MCF 10A (cell line): ENCODE measurements at regions of chr19 and their contacts with region 1.

Region 1: DNA sequence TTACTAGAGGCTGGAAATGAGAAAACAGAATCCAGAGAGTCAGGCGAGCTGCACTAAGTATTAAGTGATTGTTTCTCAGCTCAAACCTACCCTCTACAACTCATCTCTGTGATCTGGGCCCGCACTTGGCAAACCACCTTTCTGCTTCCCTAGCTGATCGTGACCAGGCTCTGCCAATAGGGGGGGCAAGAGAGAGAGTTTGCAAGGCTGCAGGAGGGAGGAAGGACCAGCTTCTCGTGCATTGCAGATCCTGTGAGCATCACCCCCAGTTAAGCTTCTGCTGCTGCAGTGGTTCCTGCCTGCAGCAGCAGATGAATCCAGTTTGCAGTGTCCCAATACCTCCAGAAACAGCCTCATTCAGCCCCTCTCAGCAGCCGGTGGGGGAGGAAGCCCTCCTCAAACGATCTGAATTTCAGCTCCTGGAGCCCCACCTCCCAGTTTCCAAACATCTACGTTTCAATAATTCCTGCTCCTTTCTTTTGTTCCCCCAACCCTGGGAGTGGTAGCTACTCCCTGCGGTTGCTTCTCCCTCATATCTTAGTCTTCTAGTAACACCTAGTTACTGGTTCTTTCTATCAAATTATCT is 20.0 kb downstream of the XRCC1 start:
- DNase-seq: peak; percentile 81
- H3K4me3 Mint-ChIP-seq: no peak overlapping the region
- H3K27ac Mint-ChIP-seq: no peak overlapping the region
- H3K4me1 Mint-ChIP-seq: no peaks in the 10 kb centered on the region
- H3K27me3 Mint-ChIP-seq: no peaks in the 10 kb centered on the region
- CTCF ChIP-seq: peak; percentile 76

Region 2: GRCh38 chr19:43433358-43433673 is 122.0 kb before region 1 on chr19:
- CTCF ChIA-PET with region 1: no interaction called
- POLR2A ChIA-PET with region 1: no interaction called
- intact Hi-C with region 1: no loop called
- DNase-seq: no peak
- H3K4me3 Mint-ChIP-seq: no peak overlapping the region
- H3K27ac Mint-ChIP-seq: no peak overlapping the region
- H3K4me1 Mint-ChIP-seq: peaks cover 2% of the 10 kb centered on the region
- H3K27me3 Mint-ChIP-seq: no peaks in the 10 kb centered on the region
- CTCF ChIP-seq: no peak

Region 3: GRCh38 chr19:43532962-43533545 is 22.2 kb before region 1 on chr19 and contains the start of gene ZNF575:
- CTCF ChIA-PET with region 1: interaction called, 19 read pairs
- POLR2A ChIA-PET with region 1: interaction called, 7 read pairs
- intact Hi-C with region 1: no loop called
- DNase-seq: peak; percentile 92
- H3K4me3 Mint-ChIP-seq: peak within 1 kb of the TSS; percentile 78
- H3K27ac Mint-ChIP-seq: peak within 1 kb of the TSS; percentile 3
- H3K4me1 Mint-ChIP-seq: peaks cover 8% of the 10 kb centered on the region
- H3K27me3 Mint-ChIP-seq: no peaks in the 10 kb centered on the region
- CTCF ChIP-seq: no peak
- total RNA-seq, gene ZNF575: 0.81 and 1.1 TPM in 2 replicates

Region 4: DNA sequence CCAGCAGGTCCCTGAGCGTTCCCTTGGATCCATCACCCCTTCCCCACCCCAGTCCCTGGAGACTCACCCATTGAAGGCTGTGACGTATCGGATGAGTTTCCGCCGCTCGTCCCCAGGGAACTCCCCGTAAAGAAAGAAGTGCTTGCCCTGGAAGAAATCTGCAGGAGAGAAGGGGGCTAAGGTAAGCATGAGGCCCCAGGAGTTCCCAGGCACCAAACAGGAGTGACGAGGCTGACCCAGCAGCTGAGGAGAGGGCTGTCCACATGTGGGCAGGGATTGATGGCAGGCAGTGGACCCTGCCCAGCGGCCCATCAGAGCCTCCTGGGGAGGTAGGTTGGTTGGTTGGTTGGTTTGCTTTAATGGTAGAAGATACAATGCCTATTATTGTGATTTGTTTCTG is 11.2 kb before region 1 on chr19:
- CTCF ChIA-PET with region 1: interaction called, 12 read pairs
- POLR2A ChIA-PET with region 1: no interaction called
- intact Hi-C with region 1: no loop called
- DNase-seq: no peak
- H3K4me3 Mint-ChIP-seq: no peak overlapping the region
- H3K27ac Mint-ChIP-seq: no peak overlapping the region
- H3K4me1 Mint-ChIP-seq: no peaks in the 10 kb centered on the region
- H3K27me3 Mint-ChIP-seq: no peaks in the 10 kb centered on the region
- CTCF ChIP-seq: no peak

Region 5: DNA sequence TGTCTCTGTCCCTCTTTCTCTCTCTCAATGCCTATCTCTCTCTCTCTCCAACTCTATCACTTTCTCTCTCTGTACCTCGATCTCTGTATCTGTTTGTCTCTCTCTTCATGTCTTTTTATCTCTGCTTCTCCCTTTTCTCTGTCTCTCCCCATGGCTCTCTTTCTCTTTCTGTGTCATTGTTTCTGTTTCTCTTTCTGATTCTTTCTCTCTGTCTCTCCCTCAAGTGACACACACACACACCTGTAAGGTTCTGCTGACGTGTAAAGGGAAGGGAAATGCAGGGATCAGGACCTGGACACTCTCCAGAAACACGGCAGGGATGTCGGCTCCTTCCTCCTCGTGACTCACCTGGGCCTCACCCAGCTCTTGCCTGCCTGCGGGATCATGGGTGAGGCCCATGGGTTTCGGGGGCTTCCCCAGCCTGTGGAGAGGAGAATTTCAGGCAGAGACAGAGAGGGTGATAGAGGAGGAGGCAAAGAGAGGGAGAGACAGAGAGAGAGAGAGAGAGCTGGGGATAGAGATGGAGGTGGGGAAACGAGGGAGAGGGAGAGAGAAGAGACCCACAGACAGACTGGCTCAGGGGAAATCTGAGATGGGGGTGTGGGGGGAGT is 120.1 kb after region 1 on chr19:
- CTCF ChIA-PET with region 1: no interaction called
- POLR2A ChIA-PET with region 1: no interaction called
- intact Hi-C with region 1: no loop called
- DNase-seq: peak; percentile 98
- H3K4me3 Mint-ChIP-seq: peak overlapping the region; percentile 59
- H3K27ac Mint-ChIP-seq: peak overlapping the region; percentile 96
- H3K4me1 Mint-ChIP-seq: peaks cover 20% of the 10 kb centered on the region
- H3K27me3 Mint-ChIP-seq: no peaks in the 10 kb centered on the region
- CTCF ChIP-seq: no peak